Mammary epithelial cell (primary cell): ENCODE measurements at regions of chrX and their contacts with region 1.

Region 1: DNA sequence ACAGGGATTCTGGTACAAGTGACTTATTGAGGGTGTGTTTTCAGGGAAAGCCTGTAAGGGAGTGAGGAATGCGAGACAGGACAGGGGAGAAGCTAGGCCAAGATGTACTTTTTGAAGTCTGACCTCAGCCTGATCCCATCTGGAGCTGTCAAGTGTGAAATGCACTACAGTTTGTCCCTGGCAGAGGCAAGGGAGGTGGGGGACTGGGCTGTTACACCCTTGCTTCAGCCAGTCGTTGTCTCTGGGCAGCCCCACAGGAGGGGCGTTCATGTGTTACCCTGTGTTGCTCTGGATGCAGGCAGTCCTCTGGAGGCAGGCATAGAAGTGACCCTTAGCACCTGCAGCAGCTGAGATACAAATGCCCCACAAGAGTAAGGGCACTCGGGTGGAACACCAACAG is 25.8 kb downstream of the PPEF1 start:
- DNase-seq: no peak
- H3K4me3 ChIP-seq: no peak overlapping the region
- H3K27ac ChIP-seq: no peak overlapping the region
- H3K4me1 ChIP-seq: no peaks in the 10 kb centered on the region
- H3K27me3 ChIP-seq: no peaks in the 10 kb centered on the region
- CTCF ChIP-seq: no peak

Region 2: GRCh38 chrX:18354369-18355223 is 378.7 kb before region 1 on chrX and contains the start of gene SCML2:
- CTCF ChIA-PET with region 1: no interaction called
- dilution Hi-C with region 1: no loop called
- in situ Hi-C with region 1: no loop called
- intact Hi-C with region 1: no loop called
- DNase-seq: peak; percentile 2
- H3K4me3 ChIP-seq: peak within 1 kb of the TSS; percentile 30 to 55 (median 51)
- H3K27ac ChIP-seq: no peak within 1 kb of the TSS
- H3K4me1 ChIP-seq: no peaks in the 10 kb centered on the region
- H3K27me3 ChIP-seq: peaks cover 2% of the 10 kb centered on the region
- CTCF ChIP-seq: no peak
- total RNA-seq, gene SCML2: 0.50 to 0.78 TPM

Region 3: DNA sequence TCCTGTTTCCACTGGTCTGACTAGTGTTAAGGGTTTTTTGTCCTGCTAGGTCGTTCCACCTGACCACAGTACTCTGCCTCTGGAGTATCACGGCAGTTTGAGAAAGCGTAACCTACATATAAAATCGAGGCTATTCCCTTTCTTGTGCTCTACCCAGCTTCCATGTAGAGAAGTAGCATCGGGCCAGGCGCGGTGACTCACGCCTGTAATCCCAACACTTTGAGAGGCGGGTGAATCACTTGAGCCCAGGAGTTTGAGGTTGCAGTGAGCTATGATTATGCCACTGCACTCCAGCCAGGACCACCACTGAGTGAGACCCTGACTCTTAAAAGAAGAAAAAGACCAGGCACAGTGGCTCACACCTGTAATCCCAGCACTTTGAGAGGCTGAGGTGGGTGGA is 18.4 kb before region 1 on chrX:
- CTCF ChIA-PET with region 1: no interaction called
- dilution Hi-C with region 1: no loop called
- in situ Hi-C with region 1: no loop called
- intact Hi-C with region 1: no loop called
- DNase-seq: no peak
- H3K4me3 ChIP-seq: no peak overlapping the region
- H3K27ac ChIP-seq: no peak overlapping the region
- H3K4me1 ChIP-seq: no peaks in the 10 kb centered on the region
- H3K27me3 ChIP-seq: no peaks in the 10 kb centered on the region
- CTCF ChIP-seq: no peak

Region 4: DNA sequence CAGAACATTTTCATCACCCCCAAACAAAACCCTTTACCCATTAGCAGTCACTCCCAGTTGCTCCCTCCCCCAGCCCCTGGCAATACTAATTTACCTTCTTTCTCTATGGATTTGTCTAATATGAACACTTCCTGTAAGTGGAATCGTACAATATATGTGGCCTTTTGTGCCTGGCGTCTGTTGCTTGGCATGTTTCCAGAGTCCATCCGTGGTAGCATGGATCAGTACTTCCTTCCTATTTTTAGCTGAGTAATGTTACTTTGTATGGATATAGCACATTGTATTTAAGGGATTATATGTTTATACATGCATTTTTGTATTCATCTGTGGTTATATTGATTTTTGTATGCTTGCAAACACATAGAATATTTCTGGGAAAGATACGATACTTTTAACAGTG is 22.4 kb after region 1 on chrX:
- CTCF ChIA-PET with region 1: interaction called, 15 read pairs
- dilution Hi-C with region 1: no loop called
- in situ Hi-C with region 1: no loop called
- intact Hi-C with region 1: no loop called
- DNase-seq: no peak
- H3K4me3 ChIP-seq: no peak overlapping the region
- H3K27ac ChIP-seq: no peak overlapping the region
- H3K4me1 ChIP-seq: no peaks in the 10 kb centered on the region
- H3K27me3 ChIP-seq: no peaks in the 10 kb centered on the region
- CTCF ChIP-seq: no peak